ENCODE measurements at regions of chr13 and their contacts with region 1.

Region 1: DNA sequence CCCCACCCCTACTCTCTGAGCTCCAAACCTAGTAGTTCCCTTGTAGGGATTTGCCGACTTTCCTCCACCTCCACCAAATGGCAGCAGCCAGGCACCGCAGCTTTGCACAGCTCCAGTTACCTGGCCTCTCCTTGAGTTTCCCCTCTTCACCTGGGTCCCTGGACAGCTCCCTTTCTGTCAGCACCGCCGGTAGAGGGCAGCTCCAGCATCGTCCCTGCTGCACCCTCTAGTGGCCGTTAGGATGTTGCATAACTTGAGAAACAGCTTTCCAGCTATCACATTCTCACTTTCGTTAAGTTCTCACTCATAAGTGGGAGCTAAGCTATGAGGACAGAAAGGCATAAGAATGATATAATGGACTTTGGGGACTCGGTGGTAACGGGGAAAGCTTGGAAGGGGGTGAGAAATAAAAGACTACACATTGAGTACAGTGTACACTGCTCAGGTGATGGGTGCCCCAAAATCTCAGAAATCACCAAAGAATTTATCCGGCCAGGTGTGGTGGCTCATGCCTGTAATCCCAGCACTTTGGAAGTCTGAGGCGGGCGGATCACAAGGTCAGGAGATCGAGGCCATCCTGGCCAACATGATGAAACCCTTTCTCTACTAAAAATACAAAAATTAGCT is 60.4 kb upstream of the OLFM4 start:
- DNase-seq: peak; percentile 71
- H3K4me3 ChIP-seq: no peak overlapping the region; a peak in 1 of 4 replicates
- H3K27ac ChIP-seq: no peak overlapping the region
- H3K4me1 ChIP-seq: no peaks in the 10 kb centered on the region
- H3K27me3 ChIP-seq: no peaks in the 10 kb centered on the region
- CTCF ChIP-seq: peak; percentile 96
- EP300 ChIP-seq: no peak
- RAD21 ChIP-seq: peak; percentile 83

Region 2: GRCh38 chr13:52850396-52851136 is 117.6 kb before region 1 on chr13:
- CTCF ChIA-PET with region 1: interaction called, 17 read pairs
- POLR2A ChIA-PET with region 1: no interaction called
- DNase-seq: peak; percentile 71
- H3K4me3 ChIP-seq: peak overlapping the region; percentile 69 to 97
- H3K27ac ChIP-seq: peak overlapping the region in 1 of 2 experiments; percentile 79; a peak in 2 of 4 replicates
- H3K4me1 ChIP-seq: peaks cover 6 to 34% of the 10 kb centered on the region in 2 experiments; a peak in 3 of 4 replicates
- H3K27me3 ChIP-seq: peaks cover 37% of the 10 kb centered on the region
- CTCF ChIP-seq: peak; percentile 26; the same call in 1 of the 2 replicates
- EP300 ChIP-seq: no peak
- RAD21 ChIP-seq: no peak

Region 3: DNA sequence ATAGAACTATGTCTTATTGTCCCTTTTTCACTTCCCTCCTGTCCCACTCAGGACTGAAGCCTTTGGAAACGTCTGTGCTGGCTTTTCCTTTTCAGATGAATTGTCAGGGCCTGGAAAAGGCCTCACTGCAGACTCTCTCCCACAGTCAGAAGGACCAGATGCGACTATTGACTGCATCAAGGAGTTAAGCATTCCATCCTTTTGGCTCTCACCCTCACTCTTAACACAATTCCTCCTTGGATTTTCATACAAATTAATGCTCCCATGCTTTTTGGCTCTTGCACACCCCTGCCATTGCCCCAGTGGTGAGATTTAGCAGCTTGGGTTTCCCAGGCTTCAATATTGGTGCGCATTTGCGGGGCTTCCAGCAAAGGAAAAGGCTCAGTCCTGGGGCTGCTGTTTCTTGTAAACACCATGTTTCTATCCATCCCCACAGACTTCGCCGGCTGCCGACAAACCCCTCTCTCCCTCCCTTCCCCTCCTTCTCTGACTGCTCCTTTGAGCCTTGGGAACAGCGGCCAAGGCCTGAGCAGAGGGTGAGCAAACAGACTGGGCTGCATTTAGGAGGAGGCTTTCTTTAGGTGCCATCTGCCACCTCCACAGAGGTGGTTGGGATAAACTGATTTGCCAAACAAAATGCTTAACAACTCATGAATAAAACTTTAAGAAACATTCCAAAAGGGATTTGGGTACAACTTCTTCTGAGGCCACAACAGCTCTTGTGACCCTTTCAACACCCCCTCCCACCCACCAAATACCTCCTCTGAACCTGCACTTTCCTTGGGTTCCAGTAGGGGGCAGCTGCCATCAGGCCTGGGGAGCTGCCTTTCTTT is 71.1 kb before region 1 on chr13:
- CTCF ChIA-PET with region 1: interaction called, 10 read pairs
- POLR2A ChIA-PET with region 1: no interaction called
- DNase-seq: peak; percentile 61
- H3K4me3 ChIP-seq: no peak overlapping the region
- H3K27ac ChIP-seq: no peak overlapping the region
- H3K4me1 ChIP-seq: no peaks in the 10 kb centered on the region
- H3K27me3 ChIP-seq: no peaks in the 10 kb centered on the region
- CTCF ChIP-seq: peak; percentile 62
- EP300 ChIP-seq: no peak
- RAD21 ChIP-seq: peak; percentile 49

Region 4: GRCh38 chr13:52980695-52981094 is 12.5 kb after region 1 on chr13:
- CTCF ChIA-PET with region 1: interaction called, 105 read pairs
- POLR2A ChIA-PET with region 1: no interaction called
- DNase-seq: no peak
- H3K4me3 ChIP-seq: no peak overlapping the region; a peak in 1 of 4 replicates
- H3K27ac ChIP-seq: peak overlapping the region in 1 of 2 experiments; percentile 51; a peak in 2 of 4 replicates
- H3K4me1 ChIP-seq: no peaks in the 10 kb centered on the region; a peak in 1 of 4 replicates
- H3K27me3 ChIP-seq: no peaks in the 10 kb centered on the region
- CTCF ChIP-seq: no peak
- EP300 ChIP-seq: no peak
- RAD21 ChIP-seq: no peak

Region 5: DNA sequence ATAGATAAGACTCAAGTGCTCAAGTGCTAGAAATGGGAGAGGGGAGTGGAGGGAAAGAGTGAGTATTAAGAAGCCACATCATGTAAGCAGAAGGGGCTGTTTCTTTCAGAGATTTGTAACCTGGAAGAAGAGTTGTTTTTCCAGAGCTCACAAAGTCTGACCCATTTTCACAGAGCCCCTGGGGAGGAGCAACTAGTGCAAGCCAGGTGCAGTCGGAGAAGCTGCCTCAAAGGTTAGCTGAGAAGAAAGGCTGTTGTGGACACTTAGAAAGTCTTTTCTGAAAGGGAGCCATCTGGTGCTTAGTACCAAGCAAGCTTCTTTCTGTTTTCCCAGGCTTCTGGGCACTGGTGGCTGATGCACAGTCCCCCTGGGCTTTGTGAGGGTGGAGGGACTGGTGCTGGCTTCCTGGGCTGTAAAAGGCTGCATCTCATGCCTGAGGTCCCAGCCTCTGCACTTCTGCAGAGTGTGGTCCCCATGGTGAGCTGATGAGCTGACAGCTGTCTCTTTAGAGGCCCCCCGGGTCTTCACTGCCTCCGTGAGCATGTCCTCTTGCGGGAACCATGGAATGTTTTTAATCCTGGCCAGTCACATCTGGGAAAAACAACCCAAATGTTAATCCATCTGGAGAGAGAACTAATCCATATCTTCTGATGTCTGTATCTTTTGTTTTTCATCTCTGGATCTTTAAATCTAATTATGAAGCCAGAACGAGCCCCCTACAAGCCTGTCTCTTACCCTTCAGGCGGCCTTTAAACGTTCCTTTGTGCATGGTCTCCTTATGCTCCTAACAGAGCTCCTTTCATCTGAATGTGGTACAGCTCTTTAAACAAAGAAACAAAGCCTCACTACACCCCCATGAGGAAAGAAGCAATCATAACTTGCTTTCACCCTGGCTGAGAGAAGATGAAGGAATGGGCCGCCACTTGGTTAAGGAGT is 100.7 kb after region 1 on chr13:
- CTCF ChIA-PET with region 1: interaction called, 15 read pairs
- POLR2A ChIA-PET with region 1: no interaction called
- DNase-seq: peak; percentile 51
- H3K4me3 ChIP-seq: no peak overlapping the region
- H3K27ac ChIP-seq: peak overlapping the region in 1 of 2 experiments; percentile 78; a peak in 1 of 4 replicates
- H3K4me1 ChIP-seq: peaks cover 0 to 28% of the 10 kb centered on the region in 2 experiments; a peak in 2 of 4 replicates
- H3K27me3 ChIP-seq: no peaks in the 10 kb centered on the region
- CTCF ChIP-seq: no peak
- EP300 ChIP-seq: 0 out of 4 replicates have a peak, but pooled peaks of 1 of the 2 experiments have one; percentile 71
- RAD21 ChIP-seq: peak; percentile 56

Region 6: DNA sequence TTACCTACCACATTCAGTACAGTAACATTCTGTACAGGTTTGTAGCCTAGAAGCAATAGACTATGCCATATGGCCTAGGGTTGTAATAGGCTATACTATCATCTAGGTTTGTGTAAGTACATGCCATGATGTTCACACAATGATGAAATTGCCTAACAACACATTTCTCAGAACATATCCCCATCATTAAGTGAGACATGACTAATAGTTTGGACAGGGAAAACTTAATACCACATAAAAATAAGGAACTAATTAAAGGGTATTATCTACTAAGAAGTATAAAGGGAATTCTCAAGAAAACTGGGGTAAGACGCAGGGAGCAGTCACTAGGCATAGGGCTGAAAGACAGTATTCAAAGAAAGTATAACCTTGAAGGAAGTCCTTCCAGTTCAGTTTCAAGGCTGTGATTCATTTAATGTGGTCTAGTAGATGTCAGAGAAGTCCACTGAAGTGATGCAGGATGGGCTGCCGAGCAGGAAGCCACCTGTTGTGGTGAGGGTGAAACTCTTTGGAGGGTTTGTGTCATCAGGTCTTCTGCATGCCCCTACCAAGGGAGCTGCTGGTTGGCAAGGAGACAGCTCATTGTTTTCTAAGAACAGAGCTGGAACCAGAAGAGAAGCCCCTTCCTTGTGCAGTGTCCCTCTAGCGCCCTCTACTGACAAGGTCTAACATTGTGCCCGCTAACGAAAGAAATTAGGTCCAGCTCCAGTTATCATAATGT is 183.3 kb after region 1 on chr13:
- CTCF ChIA-PET with region 1: interaction called, 128 read pairs
- POLR2A ChIA-PET with region 1: interaction called, 8 read pairs
- DNase-seq: peak; percentile 54
- H3K4me3 ChIP-seq: peak overlapping the region in 1 of 2 experiments; percentile 51; a peak in 1 of 4 replicates
- H3K27ac ChIP-seq: no peak overlapping the region
- H3K4me1 ChIP-seq: no peaks in the 10 kb centered on the region; a peak in 1 of 4 replicates
- H3K27me3 ChIP-seq: no peaks in the 10 kb centered on the region
- CTCF ChIP-seq: peak; percentile 82
- EP300 ChIP-seq: no peak
- RAD21 ChIP-seq: peak; percentile 89